ENCODE measurements at regions of chr1 and their contacts with region 1.

Region 1: GRCh38 chr1:186915555-186915954 is 86.8 kb downstream of the PLA2G4A start:
- DNase-seq: peak; percentile 12
- ATAC-seq: no peak
- H3K4me3 ChIP-seq: no peak overlapping the region
- H3K27ac ChIP-seq: no peak overlapping the region
- H3K4me1 ChIP-seq: no peaks in the 10 kb centered on the region
- H3K27me3 ChIP-seq: no peaks in the 10 kb centered on the region
- CTCF ChIP-seq: peak; percentile 44

Region 2: DNA sequence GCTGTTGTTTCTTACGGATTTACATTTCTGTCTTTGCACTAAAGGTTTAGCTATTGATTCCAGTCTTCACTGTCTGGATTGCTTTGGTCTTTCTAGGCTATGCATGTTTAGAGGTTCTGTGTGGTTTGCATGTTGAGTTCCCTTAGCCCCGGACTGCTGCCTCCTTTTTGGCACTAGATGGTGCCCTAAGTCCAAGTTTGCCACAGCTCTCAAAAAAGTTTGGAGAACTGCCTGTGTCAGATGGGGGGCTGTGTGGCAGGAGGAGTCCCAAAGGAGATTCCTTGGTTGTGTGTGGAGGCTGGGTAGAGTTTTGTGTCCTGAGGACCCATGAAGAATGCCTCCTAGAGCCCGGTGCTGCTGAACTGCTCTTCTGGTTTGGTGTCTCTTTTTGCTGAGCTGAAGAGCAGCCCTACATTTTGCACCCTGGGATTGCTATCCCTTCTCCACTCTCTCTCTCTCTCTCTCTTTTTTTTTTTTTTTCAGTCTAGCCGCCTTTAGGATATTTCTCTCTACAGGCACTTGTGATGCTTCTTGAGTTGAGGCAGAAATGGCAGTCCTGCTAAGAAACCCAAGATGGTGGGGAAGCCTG is 309.7 kb before region 1 on chr1:
- CTCF ChIA-PET with region 1: no interaction called
- POLR2A ChIA-PET with region 1: no interaction called
- intact Hi-C with region 1: loop called (anchors 2 kb)
- DNase-seq: peak; percentile 57
- ATAC-seq: peak; percentile 56; the same call in 1 of the 2 replicates
- H3K4me3 ChIP-seq: no peak overlapping the region
- H3K27ac ChIP-seq: peak overlapping the region; percentile 11; the same call in 1 of the 2 replicates
- H3K4me1 ChIP-seq: no peaks in the 10 kb centered on the region
- H3K27me3 ChIP-seq: no peaks in the 10 kb centered on the region
- CTCF ChIP-seq: peak; percentile 79

Region 3: GRCh38 chr1:186680245-186681061 is 235.1 kb before region 1 on chr1 and contains the start of gene PTGS2:
- CTCF ChIA-PET with region 1: no interaction called
- POLR2A ChIA-PET with region 1: no interaction called
- intact Hi-C with region 1: loop called (anchors 1 kb)
- DNase-seq: peak; percentile 55
- ATAC-seq: peak; percentile 92
- H3K4me3 ChIP-seq: peak within 1 kb of the TSS; percentile 65
- H3K27ac ChIP-seq: peak within 1 kb of the TSS; percentile 14; the same call in 1 of the 2 replicates
- H3K4me1 ChIP-seq: no peaks in the 10 kb centered on the region
- H3K27me3 ChIP-seq: no peaks in the 10 kb centered on the region
- CTCF ChIP-seq: peak; percentile 47; the same call in 1 of the 2 replicates
- total RNA-seq, gene PTGS2: 4.9 and 7.9 TPM in 2 replicates

Region 4: GRCh38 chr1:186985889-186986491 is 70.4 kb after region 1 on chr1:
- CTCF ChIA-PET with region 1: no interaction called
- POLR2A ChIA-PET with region 1: no interaction called
- intact Hi-C with region 1: loop called (anchors 1 kb)
- DNase-seq: peak; percentile 73
- ATAC-seq: peak; percentile 59
- H3K4me3 ChIP-seq: no peak overlapping the region
- H3K27ac ChIP-seq: no peak overlapping the region
- H3K4me1 ChIP-seq: no peaks in the 10 kb centered on the region
- H3K27me3 ChIP-seq: no peaks in the 10 kb centered on the region
- CTCF ChIP-seq: peak; percentile 77

Region 5: DNA sequence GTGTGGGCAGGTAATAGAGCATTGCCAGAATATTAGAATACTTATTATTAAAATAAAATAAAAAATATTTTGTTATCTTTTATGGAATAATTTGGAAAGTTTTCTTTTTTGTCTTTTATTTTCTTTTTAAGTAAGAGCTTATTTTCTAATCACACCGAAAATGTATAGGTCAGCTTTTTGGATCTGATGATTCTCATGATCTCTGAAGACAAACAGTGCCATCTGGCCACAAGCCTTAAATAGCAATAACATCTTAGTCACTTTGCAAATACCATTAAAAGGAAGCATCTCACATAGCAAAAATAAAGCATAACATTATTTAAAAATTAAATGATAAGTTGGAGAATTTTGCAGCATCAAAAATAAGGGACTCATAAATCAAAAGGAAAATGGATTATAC is 127.0 kb after region 1 on chr1:
- CTCF ChIA-PET with region 1: no interaction called
- POLR2A ChIA-PET with region 1: no interaction called
- intact Hi-C with region 1: no loop called
- DNase-seq: peak; percentile 55
- ATAC-seq: no peak
- H3K4me3 ChIP-seq: no peak overlapping the region
- H3K27ac ChIP-seq: no peak overlapping the region
- H3K4me1 ChIP-seq: peaks cover 24% of the 10 kb centered on the region
- H3K27me3 ChIP-seq: no peaks in the 10 kb centered on the region
- CTCF ChIP-seq: no peak